A549 (cell line): ENCODE measurements at regions of chr2 and their contacts with region 1.

Region 1: GRCh38 chr2:238152771-238153688 is 5.7 kb upstream of the ERFE start:
- DNase-seq: no peak
- ATAC-seq: no peak
- H3K4me3 ChIP-seq: no peak overlapping the region
- H3K27ac ChIP-seq: no peak overlapping the region
- H3K4me1 ChIP-seq: no peaks in the 10 kb centered on the region
- CTCF ChIP-seq: no peak
- EP300 ChIP-seq: no peak
- POLR2A ChIP-seq: no peak
- RAD21 ChIP-seq: no peak

Region 2: GRCh38 chr2:238139196-238140039 is 13.6 kb before region 1 on chr2:
- CTCF ChIA-PET with region 1: interaction called, 13 read pairs
- POLR2A ChIA-PET with region 1: no interaction called
- DNase-seq: no peak
- ATAC-seq: peak in 1 of 2 experiments; percentile 23; a peak in 1 of 6 replicates
- H3K4me3 ChIP-seq: no peak overlapping the region
- H3K27ac ChIP-seq: peak overlapping the region in 1 of 2 experiments; percentile 65; a peak in 2 of 6 replicates
- H3K4me1 ChIP-seq: peaks cover 52% of the 10 kb centered on the region
- CTCF ChIP-seq: peak; percentile 43
- EP300 ChIP-seq: no peak
- POLR2A ChIP-seq: no peak
- RAD21 ChIP-seq: no peak